Cardiac septum (tissue), 1 donor: ENCODE measurements at regions of chr10 and their contacts with region 1.

Region 1: DNA sequence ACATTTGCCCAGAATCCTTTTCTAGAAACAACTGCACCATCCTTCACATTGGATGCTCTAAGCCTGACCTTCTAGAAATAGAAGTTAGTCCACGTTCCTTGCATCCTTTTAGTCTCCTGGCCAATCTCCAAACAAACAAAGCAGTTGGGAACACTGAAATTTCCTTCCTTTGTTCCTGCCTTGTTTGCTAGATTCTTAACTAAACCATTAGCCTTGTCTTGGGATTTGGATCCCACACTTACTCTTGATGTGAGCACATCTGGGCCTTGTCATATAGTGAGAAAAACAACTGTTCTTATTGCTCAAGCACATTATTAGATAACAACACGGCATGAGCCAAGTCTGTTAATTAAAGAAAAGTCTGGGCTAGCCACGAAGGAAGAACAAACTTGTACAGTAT is 319.3 kb upstream of the GHITM start:
- DNase-seq: no peak

Region 2: GRCh38 chr10:83539528-83540308 is 280.3 kb before region 1 on chr10:
- intact Hi-C with region 1: loop called (anchors 5 kb)
- DNase-seq: peak; percentile 78

Region 3: GRCh38 chr10:83603708-83604107 is 216.3 kb before region 1 on chr10:
- intact Hi-C with region 1: loop called (anchors 10 kb)
- DNase-seq: no peak